ENCODE measurements at regions of chr3 and their contacts with region 1.

Region 1: GRCh38 chr3:146065573-146066006 is 95.4 kb downstream of the PLOD2 start:
- DNase-seq: peak; percentile 76
- ATAC-seq: no peak
- H3K4me3 ChIP-seq: no peak overlapping the region
- H3K27ac ChIP-seq: no peak overlapping the region
- H3K4me1 ChIP-seq: no peaks in the 10 kb centered on the region
- H3K27me3 ChIP-seq: no peaks in the 10 kb centered on the region
- CTCF ChIP-seq: peak; percentile 75
- POLR2A ChIP-seq: no peak
- RAD21 ChIP-seq: peak; percentile 69

Region 2: DNA sequence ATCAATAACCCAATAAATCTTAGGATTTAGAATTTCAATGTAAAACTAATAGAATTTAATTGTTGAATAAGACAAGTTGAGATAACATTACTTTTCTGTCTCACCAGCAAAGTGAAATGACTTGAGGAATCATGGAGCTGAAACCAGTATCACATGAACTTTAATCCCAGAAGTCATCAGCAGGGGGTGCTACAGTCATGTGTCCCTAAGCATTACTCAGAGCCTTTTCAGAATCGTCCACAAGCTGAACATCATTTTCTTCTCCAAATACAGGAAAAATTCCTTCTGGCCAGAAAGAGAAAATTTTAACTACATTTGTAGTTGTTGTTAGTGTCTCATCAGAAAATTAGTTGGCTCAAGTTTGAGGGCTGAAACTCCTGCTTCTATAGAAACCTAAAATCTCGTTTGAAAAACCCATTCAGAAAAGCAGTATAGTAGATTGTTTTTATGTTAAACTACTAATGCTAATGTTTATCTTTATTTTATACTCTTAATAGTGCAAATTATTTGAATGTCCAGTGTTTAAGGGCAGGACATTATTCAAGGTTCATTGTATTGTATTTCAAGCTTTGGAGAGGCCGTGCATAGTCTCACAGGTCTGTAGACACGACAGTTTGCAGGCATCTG is 288.7 kb before region 1 on chr3:
- CTCF ChIA-PET with region 1: no interaction called
- POLR2A ChIA-PET with region 1: no interaction called
- dilution Hi-C with region 1: no loop called
- in situ Hi-C with region 1: no loop called
- intact Hi-C with region 1: loop called (anchors 10 kb)
- DNase-seq: peak; percentile 54
- ATAC-seq: peak; percentile 56; the same call in 1 of the 2 replicates
- H3K4me3 ChIP-seq: no peak overlapping the region
- H3K27ac ChIP-seq: no peak overlapping the region
- H3K4me1 ChIP-seq: no peaks in the 10 kb centered on the region
- H3K27me3 ChIP-seq: no peaks in the 10 kb centered on the region
- CTCF ChIP-seq: peak; percentile 53
- POLR2A ChIP-seq: no peak
- RAD21 ChIP-seq: peak; percentile 57

Region 3: GRCh38 chr3:146166450-146167225 is 101.0 kb after region 1 on chr3:
- CTCF ChIA-PET with region 1: interaction called, 10 read pairs
- POLR2A ChIA-PET with region 1: interaction called, 9 read pairs
- dilution Hi-C with region 1: no loop called
- in situ Hi-C with region 1: loop called (anchors 5 kb)
- intact Hi-C with region 1: no loop called
- DNase-seq: peak; percentile 83
- ATAC-seq: peak; percentile 25; the same call in 1 of the 2 replicates
- H3K4me3 ChIP-seq: no peak overlapping the region
- H3K27ac ChIP-seq: peak overlapping the region; percentile 19; the same call in 1 of the 2 replicates
- H3K4me1 ChIP-seq: peaks cover 18% of the 10 kb centered on the region
- H3K27me3 ChIP-seq: no peaks in the 10 kb centered on the region
- CTCF ChIP-seq: no peak
- POLR2A ChIP-seq: no peak
- RAD21 ChIP-seq: no peak

Region 4: DNA sequence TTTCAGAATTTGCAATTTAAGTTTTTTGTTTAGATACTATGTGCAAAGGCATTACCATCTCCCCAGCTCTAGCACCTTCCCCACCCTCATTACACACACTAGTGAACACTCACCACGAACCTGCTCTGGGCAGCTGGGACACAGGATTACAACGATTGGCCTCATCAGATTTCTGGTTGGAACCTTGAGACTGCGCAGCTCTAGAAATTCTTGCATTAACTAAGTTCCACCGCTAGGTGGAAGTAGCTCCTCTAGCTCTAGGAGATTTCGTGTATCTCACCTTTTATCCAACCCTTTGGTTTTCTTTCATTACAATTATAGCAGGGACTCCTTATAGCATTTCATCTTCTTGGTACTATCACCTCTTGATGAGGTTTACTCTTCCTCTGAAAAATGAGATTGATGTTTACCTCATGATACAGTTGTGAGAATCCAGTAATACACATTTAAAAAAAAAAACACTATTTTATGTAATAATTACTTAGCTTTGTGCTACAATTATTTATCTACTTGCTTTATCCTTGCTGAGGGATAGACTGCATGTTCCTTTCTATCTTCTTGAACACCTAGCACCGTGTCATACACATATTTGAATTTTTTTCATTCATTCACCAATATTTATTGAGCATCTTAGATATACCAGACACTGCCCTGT is 124.1 kb after region 1 on chr3:
- CTCF ChIA-PET with region 1: interaction called, 29 read pairs
- POLR2A ChIA-PET with region 1: no interaction called
- dilution Hi-C with region 1: no loop called
- in situ Hi-C with region 1: no loop called
- intact Hi-C with region 1: loop called (anchors 1 kb)
- DNase-seq: peak; percentile 64
- ATAC-seq: peak; percentile 95
- H3K4me3 ChIP-seq: no peak overlapping the region
- H3K27ac ChIP-seq: no peak overlapping the region
- H3K4me1 ChIP-seq: no peaks in the 10 kb centered on the region
- H3K27me3 ChIP-seq: no peaks in the 10 kb centered on the region
- CTCF ChIP-seq: peak; percentile 79
- POLR2A ChIP-seq: no peak
- RAD21 ChIP-seq: peak; percentile 83

Region 5: DNA sequence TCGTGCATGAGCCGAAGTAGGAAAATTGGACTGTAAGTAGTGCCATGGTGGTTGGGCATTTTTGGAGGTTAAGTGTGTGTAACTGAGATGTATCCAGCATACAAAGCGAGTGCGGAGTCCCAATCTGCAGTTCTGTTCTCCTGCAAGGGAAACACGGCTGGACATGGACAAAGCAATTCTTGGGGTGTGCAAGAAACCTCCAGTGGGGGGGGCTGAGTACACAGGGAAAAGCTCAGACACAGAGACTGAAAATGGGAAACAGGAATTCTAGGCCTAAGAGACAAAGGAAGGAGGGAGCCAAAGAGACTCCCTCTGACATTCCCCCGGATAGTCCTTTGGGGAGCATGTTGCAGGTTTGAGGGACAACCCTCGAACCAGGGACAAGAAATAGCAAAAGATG is 268.6 kb after region 1 on chr3:
- CTCF ChIA-PET with region 1: no interaction called
- POLR2A ChIA-PET with region 1: no interaction called
- dilution Hi-C with region 1: no loop called
- in situ Hi-C with region 1: loop called (anchors 5 kb)
- intact Hi-C with region 1: no loop called
- DNase-seq: peak; percentile 15
- ATAC-seq: no peak
- H3K4me3 ChIP-seq: no peak overlapping the region
- H3K27ac ChIP-seq: no peak overlapping the region
- H3K4me1 ChIP-seq: no peaks in the 10 kb centered on the region
- H3K27me3 ChIP-seq: no peaks in the 10 kb centered on the region
- CTCF ChIP-seq: peak; percentile 42
- POLR2A ChIP-seq: no peak
- RAD21 ChIP-seq: peak; percentile 57